ENCODE measurements at regions of chr17 and their contacts with region 1.

Region 1: DNA sequence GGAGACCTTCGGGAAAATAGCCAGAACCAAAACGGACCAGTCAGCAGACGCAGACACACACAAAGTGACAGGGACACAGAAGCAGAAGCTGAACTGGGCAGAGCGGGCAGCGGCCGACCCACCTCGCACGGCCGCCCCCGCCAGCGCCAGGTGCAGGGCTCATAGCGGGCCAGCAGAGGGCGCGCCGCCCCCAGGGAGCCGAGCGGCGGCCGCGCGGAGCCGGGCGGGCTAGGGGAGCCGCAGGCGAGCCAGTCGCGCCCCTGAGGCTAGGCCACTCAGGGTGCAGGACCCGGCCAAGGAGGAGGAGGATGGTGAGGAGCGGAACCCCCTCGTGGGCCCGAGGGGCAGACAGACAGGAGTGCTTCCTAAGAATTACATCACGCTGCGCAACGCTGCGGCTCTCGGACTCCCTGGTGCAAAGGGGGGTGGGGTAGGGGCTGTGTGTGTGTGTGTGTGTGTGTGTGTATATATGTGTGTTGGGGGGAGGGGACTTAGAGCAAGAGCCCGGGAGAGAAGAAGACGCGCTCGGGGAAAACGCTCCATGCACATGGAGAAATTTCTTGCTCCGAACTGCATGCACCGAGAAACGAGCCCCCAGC is 913 bp upstream of the NOG start:
- DNase-seq: peak; percentile 66
- H3K4me3 Mint-ChIP-seq: peak overlapping the region; percentile 79
- H3K27ac Mint-ChIP-seq: no peak overlapping the region
- H3K4me1 Mint-ChIP-seq: peaks cover 17% of the 10 kb centered on the region
- H3K27me3 Mint-ChIP-seq: no peaks in the 10 kb centered on the region

Region 2: DNA sequence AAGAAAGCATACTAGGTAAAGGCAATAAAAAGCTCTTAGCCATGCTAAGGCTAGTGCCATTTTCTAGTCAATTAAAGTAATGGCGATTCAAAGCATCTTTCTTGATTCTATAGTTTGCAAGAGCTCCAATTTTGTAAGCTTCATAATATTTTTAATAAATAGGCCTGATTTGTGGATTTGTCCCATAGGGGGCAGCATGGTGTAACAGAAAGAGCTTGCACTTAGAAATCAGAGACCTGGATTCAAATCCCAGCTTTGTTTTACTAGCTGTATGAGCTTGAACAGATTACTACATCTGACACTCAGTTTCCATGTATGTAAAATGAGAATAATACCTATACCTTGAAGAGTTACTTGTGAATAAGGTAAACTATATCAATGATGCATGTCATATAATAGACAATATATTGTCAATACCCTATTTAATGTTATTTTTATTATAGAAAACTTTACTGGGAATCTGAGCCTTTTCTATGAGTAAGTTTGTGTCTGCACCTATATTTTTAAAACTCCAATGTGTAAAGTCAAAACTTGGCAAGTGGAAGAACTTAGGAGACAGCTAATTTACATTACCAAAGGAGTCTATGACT is 92.7 kb before region 1 on chr17:
- CTCF ChIA-PET with region 1: interaction called, 4 read pairs
- intact Hi-C with region 1: loop called (anchors 5 kb)
- DNase-seq: peak; percentile 64
- H3K4me3 Mint-ChIP-seq: no peak overlapping the region
- H3K27ac Mint-ChIP-seq: no peak overlapping the region
- H3K4me1 Mint-ChIP-seq: no peaks in the 10 kb centered on the region
- H3K27me3 Mint-ChIP-seq: no peaks in the 10 kb centered on the region

Region 3: GRCh38 chr17:56679115-56679766 is 86.7 kb after region 1 on chr17:
- CTCF ChIA-PET with region 1: interaction called, 13 read pairs
- intact Hi-C with region 1: loop called (anchors 1 kb)
- DNase-seq: no peak
- H3K4me3 Mint-ChIP-seq: peak overlapping the region; percentile 69
- H3K27ac Mint-ChIP-seq: no peak overlapping the region
- H3K4me1 Mint-ChIP-seq: peaks cover 19% of the 10 kb centered on the region
- H3K27me3 Mint-ChIP-seq: peaks cover 33% of the 10 kb centered on the region

Region 4: DNA sequence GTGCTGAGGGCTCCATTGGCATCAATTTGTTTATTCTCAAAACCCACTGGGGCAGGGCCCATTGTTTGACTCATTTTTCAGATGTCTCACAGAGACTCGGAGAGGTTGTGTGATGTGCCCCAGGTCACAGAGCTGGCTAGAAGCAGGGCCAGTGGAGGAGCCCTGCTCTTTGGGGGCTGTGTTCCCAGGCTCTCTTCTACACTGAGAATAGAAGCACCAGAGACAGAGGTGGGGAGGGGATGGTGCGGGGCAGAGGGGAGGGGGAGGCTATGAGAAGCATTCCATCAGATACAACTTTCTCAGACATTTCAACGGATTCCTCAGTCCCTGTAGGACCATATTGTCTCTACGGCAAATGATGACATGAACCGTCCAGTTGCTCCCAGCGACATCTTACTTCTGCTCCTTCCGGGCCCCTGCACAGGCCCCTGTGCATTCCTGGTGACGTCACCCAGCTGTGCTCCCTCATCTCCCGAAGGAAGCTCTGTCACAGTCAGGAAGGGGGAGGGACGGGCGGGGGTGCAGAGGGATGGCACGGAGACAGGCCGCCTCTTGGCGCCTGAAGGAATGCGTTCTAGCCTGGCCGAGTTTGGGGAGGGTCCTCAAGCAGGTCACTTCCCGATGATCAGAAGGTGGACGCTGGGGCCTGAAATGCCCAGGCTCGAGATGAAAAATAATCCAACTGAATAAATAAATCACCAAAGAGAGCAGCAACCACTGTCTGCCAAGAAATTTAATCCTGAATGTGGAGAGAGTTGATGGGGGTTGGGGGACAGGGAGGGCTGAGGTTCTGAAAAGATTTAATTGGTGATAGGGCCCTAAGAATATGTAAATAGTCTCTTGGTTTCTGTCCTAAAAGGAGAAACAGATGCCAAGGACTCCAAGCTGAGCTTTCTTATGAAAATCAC is 115.0 kb after region 1 on chr17:
- CTCF ChIA-PET with region 1: no interaction called
- intact Hi-C with region 1: no loop called
- DNase-seq: no peak
- H3K4me3 Mint-ChIP-seq: no peak overlapping the region
- H3K27ac Mint-ChIP-seq: no peak overlapping the region
- H3K4me1 Mint-ChIP-seq: no peaks in the 10 kb centered on the region
- H3K27me3 Mint-ChIP-seq: no peaks in the 10 kb centered on the region

Region 5: DNA sequence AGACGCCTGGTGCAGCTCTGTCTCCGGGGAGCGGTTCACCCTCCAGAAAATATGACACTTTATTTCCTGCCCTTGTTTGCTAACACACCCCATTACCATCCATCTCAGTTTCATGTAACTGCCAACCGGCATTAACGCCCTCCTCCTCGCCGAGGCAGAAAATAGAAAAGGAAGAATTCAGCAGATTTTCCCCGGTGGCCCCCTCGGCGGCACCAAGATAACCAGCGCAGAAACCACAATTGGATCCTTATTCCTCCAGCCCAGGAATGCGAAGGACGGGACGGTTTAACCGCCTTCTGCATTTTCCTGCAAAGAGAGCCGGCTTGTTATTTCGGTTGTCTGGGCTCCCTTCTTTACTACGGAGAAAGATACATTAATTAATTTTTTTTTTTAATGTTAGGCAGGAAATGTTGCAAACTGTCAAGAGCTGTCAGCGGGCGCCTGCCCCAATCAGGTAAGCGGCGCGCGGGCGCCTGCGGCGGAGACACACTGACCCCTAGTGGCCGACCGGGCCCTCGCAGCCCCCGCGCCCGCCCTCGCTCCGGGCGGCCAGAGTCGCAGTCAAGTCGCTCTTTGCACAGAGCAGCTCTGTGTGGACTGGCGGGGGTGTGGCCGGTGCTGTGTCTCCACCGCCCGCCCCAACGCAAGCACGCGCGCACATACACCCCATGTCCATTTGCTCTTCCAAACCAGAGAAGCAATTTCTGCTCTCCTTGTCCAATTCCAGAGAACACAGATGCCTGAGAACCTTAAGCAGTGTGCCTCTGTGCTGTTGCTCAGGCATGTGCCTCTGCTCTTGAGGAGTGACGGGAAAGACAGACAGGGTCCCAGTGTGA is 187.5 kb after region 1 on chr17:
- CTCF ChIA-PET with region 1: interaction called, 10 read pairs
- intact Hi-C with region 1: loop called (anchors 1 kb)
- DNase-seq: peak; percentile 89
- H3K4me3 Mint-ChIP-seq: peak overlapping the region; percentile 83
- H3K27ac Mint-ChIP-seq: peak overlapping the region; percentile 91
- H3K4me1 Mint-ChIP-seq: peaks cover 29% of the 10 kb centered on the region
- H3K27me3 Mint-ChIP-seq: no peaks in the 10 kb centered on the region

Region 6: DNA sequence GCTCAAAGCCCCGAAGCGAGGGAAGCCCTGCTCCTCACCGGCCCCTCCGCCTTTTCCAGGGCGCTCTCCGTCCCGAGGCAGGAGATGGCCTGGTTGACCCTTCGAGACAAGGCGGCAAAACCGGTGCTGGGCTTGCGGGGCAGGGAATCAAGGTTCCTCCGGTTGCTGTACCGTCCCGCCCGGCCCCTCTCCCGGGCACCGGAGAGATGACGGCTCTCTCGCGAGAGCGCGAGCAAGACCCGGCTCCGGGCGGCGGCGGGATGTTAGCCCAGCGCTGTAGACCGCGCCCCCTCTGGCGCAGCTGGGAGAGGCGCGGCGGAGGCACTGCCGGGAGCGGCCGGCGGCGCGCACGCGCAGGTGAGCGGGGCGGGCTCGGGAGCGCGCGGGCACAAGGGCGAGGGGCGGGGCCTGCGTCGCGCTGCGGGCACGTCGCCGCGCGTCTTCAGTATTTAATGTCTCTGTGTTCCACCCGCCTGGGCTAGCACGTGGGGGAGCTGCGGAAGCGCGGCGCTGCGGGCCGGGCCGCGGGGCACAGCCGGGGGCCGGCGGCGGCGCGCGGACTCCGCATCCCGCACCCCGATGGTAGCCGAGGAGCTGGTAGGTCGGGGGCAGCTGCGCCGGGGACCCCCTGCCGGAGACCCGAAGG is 492.3 kb after region 1 on chr17 and contains the start of gene AKAP1:
- CTCF ChIA-PET with region 1: no interaction called
- intact Hi-C with region 1: loop called (anchors 5 kb)
- DNase-seq: peak; percentile 95
- H3K4me3 Mint-ChIP-seq: peak within 1 kb of the TSS; percentile 83
- H3K27ac Mint-ChIP-seq: peak within 1 kb of the TSS; percentile 81
- H3K4me1 Mint-ChIP-seq: peaks cover 43% of the 10 kb centered on the region
- H3K27me3 Mint-ChIP-seq: no peaks in the 10 kb centered on the region
- total RNA-seq, gene AKAP1: 17.6 to 23.1 TPM